ENCODE measurements at regions of chr17 and their contacts with region 1.

Region 1: GRCh38 chr17:64025732-64026294 is 5.4 kb upstream of the ICAM2 start:
- DNase-seq: peak; percentile 89
- H3K4me3 ChIP-seq: peak overlapping the region; percentile 18 to 19; a peak in 2 of 4 replicates
- H3K27ac ChIP-seq: no peak overlapping the region
- H3K4me1 ChIP-seq: no peaks in the 10 kb centered on the region
- H3K27me3 ChIP-seq: no peaks in the 10 kb centered on the region
- CTCF ChIP-seq: peak; percentile 99
- EP300 ChIP-seq: no peak
- RAD21 ChIP-seq: peak; percentile 76

Region 2: GRCh38 chr17:63911657-63912426 is 114.0 kb before region 1 on chr17:
- CTCF ChIA-PET with region 1: interaction called, 214 read pairs
- POLR2A ChIA-PET with region 1: no interaction called
- DNase-seq: peak; percentile 88
- H3K4me3 ChIP-seq: no peak overlapping the region
- H3K27ac ChIP-seq: no peak overlapping the region
- H3K4me1 ChIP-seq: no peaks in the 10 kb centered on the region; a peak in 1 of 4 replicates
- H3K27me3 ChIP-seq: peaks cover 45% of the 10 kb centered on the region
- CTCF ChIP-seq: peak; percentile 70
- EP300 ChIP-seq: no peak
- RAD21 ChIP-seq: peak; percentile 62

Region 3: DNA sequence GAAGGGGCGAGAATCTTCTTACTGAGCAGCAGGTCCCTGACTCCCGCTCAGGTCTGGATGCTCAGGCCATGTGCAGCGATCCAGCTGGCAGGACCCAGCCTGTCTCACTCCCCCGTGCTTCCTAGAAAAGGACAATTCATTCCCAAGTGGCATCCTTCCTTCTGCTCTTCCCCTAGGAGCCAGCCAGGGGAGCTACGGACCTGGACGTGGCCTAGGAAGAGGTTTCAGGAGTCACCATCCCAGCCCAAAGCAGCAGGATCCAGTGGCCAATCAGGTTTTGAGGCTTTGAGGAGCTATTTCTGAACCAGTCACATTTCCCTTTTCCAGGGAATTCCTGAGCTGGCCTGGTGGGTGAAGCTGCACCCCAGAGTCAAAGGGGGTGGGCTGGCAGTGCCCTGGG is 85.9 kb before region 1 on chr17:
- CTCF ChIA-PET with region 1: interaction called, 12 read pairs
- POLR2A ChIA-PET with region 1: no interaction called
- DNase-seq: no peak
- H3K4me3 ChIP-seq: no peak overlapping the region
- H3K27ac ChIP-seq: no peak overlapping the region
- H3K4me1 ChIP-seq: no peaks in the 10 kb centered on the region
- H3K27me3 ChIP-seq: peaks cover 6% of the 10 kb centered on the region; the same call in 1 of the 2 replicates
- CTCF ChIP-seq: no peak
- EP300 ChIP-seq: no peak
- RAD21 ChIP-seq: no peak

Region 4: DNA sequence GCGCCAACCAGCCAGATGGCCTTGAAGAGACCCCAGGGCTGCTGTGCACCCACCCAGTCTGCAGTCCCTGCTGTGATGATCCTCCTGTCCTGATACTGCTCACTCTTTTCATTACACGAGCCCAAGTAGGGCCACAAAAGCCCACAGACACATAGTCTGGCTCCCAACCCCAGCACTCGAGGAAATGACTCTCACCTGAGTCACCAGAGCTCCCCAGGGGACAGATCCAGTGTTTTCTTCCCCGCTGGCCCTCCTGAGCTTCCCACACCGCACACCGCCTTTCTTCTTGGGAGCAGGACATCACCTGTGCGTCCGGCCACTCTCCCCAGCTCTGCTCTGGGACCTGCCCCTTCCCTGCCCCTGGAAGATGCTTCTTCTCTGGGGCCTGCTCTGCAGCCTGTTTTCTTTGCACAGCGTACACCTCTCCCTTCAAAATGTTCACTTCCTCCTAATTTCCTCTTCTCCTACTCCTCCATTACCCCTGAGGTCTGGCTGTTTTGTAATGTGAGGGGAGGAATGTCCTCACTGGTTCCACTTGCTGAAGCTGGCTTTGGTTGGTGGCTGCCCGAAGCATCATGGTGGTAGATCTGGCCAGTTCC is 51.1 kb before region 1 on chr17:
- CTCF ChIA-PET with region 1: interaction called, 15 read pairs
- POLR2A ChIA-PET with region 1: no interaction called
- DNase-seq: no peak
- H3K4me3 ChIP-seq: peak overlapping the region in 1 of 2 experiments; percentile 0; a peak in 1 of 4 replicates
- H3K27ac ChIP-seq: peak overlapping the region in 1 of 2 experiments; percentile 16; a peak in 1 of 4 replicates
- H3K4me1 ChIP-seq: peaks cover 8 to 12% of the 10 kb centered on the region in 2 experiments; a peak in 3 of 4 replicates
- H3K27me3 ChIP-seq: no peaks in the 10 kb centered on the region
- CTCF ChIP-seq: no peak
- EP300 ChIP-seq: no peak
- RAD21 ChIP-seq: no peak

Region 5: DNA sequence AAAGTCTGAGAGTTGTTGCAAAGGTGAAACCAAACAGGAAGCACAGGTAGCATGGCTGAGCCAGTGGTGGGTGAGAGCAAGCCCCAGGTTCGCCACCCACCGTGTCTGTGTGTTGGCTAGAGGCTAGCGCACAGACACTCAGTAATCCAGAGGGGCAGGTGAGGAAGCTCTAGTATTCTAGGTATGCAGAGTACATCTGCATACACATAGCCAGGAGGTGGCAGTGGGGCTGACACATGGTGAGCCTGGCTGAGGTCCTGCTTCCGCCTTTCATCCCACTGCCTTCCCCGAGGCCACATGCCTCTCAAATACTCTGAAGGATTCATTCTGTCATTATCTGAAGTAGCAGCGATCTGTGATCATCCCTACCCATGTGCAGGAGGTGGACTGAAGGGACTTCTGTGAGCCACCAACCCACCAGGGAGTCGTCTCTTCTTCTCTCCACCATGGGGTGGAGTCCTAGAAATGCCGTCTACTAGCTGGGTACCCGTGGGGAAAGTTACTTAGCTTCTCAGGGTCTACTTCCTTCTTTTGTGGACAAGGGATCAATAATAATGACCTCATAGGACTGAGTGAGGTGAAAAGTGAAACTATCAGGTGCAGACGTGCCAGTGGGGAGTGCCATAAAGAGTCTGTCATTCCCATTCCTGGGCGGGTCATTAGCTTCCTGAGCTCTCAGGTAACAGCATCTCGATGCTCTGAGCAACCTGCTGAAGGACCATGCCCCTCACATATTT is 30.6 kb after region 1 on chr17:
- CTCF ChIA-PET with region 1: interaction called, 266 read pairs
- POLR2A ChIA-PET with region 1: no interaction called
- DNase-seq: no peak
- H3K4me3 ChIP-seq: no peak overlapping the region
- H3K27ac ChIP-seq: no peak overlapping the region
- H3K4me1 ChIP-seq: no peaks in the 10 kb centered on the region
- H3K27me3 ChIP-seq: no peaks in the 10 kb centered on the region
- CTCF ChIP-seq: no peak
- EP300 ChIP-seq: no peak
- RAD21 ChIP-seq: no peak

Region 6: GRCh38 chr17:64115871-64116534 is 90.2 kb after region 1 on chr17:
- CTCF ChIA-PET with region 1: interaction called, 810 read pairs
- POLR2A ChIA-PET with region 1: no interaction called
- DNase-seq: no peak
- H3K4me3 ChIP-seq: no peak overlapping the region
- H3K27ac ChIP-seq: no peak overlapping the region
- H3K4me1 ChIP-seq: peaks cover 0 to 2% of the 10 kb centered on the region in 2 experiments; a peak in 1 of 4 replicates
- H3K27me3 ChIP-seq: no peaks in the 10 kb centered on the region
- CTCF ChIP-seq: no peak
- EP300 ChIP-seq: no peak
- RAD21 ChIP-seq: no peak

Region 7: GRCh38 chr17:64291254-64291851 is 265.5 kb after region 1 on chr17:
- CTCF ChIA-PET with region 1: interaction called, 17 read pairs
- POLR2A ChIA-PET with region 1: no interaction called
- DNase-seq: no peak
- H3K4me3 ChIP-seq: no peak overlapping the region
- H3K27ac ChIP-seq: no peak overlapping the region
- H3K4me1 ChIP-seq: no peaks in the 10 kb centered on the region
- H3K27me3 ChIP-seq: no peaks in the 10 kb centered on the region
- CTCF ChIP-seq: peak; percentile 58
- EP300 ChIP-seq: no peak
- RAD21 ChIP-seq: peak; percentile 26

Measured in SK-N-SH (cell line).